ENCODE measurements at regions of chr15 and their contacts with region 1.

Region 1: DNA sequence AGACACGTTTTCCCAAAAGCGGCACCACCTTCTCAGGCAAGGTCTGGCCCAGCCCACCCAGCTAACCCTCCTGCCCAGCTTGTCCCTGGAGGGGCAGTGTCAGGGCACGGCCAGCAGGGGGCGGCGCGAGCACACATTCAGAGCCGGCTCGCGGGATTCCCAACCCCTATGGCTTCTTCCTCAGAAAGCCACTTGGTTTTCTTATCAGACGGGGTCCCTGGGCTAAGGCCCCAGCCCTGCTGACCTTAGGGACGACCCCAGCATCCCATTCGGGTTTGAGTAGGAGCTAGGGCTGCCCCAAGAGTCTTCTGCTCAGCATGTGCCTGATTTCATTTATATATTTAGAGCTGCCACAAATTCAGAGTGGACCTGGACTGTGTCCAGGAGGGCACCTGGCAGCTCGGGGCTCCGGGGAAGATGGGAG is 14.5 kb downstream of the RLBP1 start:
- DNase-seq: peak; percentile 63
- H3K4me3 Mint-ChIP-seq: no peak overlapping the region
- H3K27ac Mint-ChIP-seq: peak overlapping the region; percentile 15
- H3K4me1 Mint-ChIP-seq: peaks cover 39% of the 10 kb centered on the region
- H3K27me3 Mint-ChIP-seq: peaks cover 3% of the 10 kb centered on the region

Region 2: GRCh38 chr15:87874896-87875711 is 1331.8 kb before region 1 on chr15:
- intact Hi-C with region 1: no loop called
- DNase-seq: no peak
- H3K4me3 Mint-ChIP-seq: no peak overlapping the region
- H3K27ac Mint-ChIP-seq: no peak overlapping the region
- H3K4me1 Mint-ChIP-seq: no peaks in the 10 kb centered on the region
- H3K27me3 Mint-ChIP-seq: no peaks in the 10 kb centered on the region

Region 3: DNA sequence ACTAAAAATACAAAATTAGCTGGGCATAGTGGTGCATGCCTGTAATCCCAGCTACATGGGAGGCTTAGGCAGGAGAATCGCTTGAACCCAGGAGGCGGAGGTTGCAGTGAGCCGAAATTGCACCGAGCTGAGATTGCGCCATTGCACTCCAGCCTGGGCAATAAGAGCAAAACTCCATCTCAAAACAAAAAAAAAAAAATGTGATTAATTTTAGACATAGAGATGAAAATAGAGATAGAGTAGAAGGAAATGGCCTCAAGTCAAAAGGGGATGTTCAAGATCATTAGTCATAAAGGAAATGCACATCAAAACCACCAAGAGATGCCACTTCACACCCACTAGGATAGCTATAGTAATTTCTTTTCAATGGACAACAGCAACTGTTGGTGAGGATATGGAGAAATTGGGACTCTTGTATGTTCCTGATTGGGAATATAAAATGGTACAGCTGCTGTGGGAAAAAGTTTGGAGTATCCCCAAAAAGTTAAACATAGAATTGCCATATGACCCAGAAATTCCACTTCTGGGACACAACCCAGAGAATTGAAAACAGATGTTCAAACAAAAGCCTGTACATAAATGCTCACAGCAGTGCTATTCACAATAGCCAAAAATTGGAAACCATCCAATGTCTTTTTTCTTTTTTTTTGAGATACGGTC is 63.3 kb before region 1 on chr15:
- intact Hi-C with region 1: loop called (anchors 1 kb)
- DNase-seq: no peak
- H3K4me3 Mint-ChIP-seq: no peak overlapping the region
- H3K27ac Mint-ChIP-seq: no peak overlapping the region
- H3K4me1 Mint-ChIP-seq: peaks cover 29% of the 10 kb centered on the region
- H3K27me3 Mint-ChIP-seq: no peaks in the 10 kb centered on the region

Region 4: DNA sequence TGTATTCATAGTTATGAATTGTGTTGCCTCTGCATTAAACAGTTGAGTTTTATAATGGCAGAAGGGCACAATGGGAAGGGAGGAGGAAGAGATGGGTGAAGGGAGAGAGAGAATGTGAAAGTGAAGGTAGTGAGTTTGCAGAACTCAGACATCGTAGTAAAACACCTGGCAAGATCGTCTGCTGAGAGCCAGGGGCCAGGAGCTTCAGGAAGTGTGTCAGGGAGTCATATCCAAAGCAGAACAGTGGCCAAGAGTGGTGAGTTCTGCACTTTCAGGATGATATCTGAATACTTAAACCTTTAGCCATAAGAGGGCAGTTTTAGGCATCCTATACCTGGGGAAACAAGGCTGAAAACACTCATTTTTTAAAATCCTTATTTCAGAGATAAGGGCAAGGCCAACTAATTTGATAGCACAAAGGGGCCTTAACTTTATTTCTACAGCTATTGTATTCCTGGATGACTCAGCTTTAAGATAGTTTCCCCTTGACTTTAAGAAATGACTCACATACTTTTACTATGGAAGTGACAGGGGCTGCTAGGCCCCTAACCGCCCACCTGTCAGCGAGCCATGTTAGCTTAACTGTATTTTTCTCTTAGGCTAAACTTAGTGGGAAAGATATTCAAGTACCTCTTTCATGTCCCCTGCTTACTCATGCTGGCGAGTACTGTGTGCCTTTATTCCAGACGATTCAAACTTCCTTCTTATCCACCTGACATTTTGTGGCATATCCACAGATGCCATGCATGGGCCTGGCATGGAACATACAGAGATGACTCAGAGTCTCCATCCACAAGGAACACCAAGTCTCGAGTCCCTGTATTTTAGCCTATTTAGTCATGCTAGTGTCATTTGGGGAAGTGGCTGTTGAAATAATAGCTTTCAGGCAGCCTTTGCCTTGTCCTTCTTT is 39.4 kb before region 1 on chr15:
- intact Hi-C with region 1: loop called (anchors 5 kb)
- DNase-seq: no peak
- H3K4me3 Mint-ChIP-seq: peak overlapping the region; percentile 44
- H3K27ac Mint-ChIP-seq: peak overlapping the region; percentile 86
- H3K4me1 Mint-ChIP-seq: peaks cover 29% of the 10 kb centered on the region
- H3K27me3 Mint-ChIP-seq: no peaks in the 10 kb centered on the region

Region 5: GRCh38 chr15:89243691-89244471 is 37.0 kb after region 1 on chr15 and contains the start of gene FANCI:
- intact Hi-C with region 1: loop called (anchors 1 kb)
- DNase-seq: peak; percentile 94
- H3K4me3 Mint-ChIP-seq: peak within 1 kb of the TSS; percentile 95
- H3K27ac Mint-ChIP-seq: peak within 1 kb of the TSS; percentile 89
- H3K4me1 Mint-ChIP-seq: peaks cover 37% of the 10 kb centered on the region
- H3K27me3 Mint-ChIP-seq: peaks cover 4% of the 10 kb centered on the region
- total RNA-seq, gene FANCI: 176 and 184 TPM in 2 replicates

Region 6: DNA sequence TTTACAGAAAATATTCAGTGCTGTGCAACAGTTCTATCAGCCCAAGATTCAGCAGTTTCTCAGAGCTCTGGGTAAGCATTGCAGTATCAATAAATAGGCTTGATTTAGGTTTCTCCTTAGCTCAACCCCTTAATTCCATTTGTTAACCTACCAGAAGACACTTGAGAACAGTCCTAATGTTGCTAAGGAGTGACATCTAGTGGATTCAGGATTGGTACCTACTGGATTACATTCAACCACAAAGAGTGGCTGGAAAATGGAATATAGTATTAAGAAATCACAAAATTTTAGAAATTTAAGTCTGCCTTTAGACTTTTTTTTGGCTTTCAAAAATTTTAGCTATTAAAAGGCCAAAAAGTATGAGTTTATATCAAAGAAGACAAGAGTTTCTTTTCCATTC is 93.0 kb after region 1 on chr15:
- intact Hi-C with region 1: loop called (anchors 5 kb)
- DNase-seq: no peak
- H3K4me3 Mint-ChIP-seq: no peak overlapping the region
- H3K27ac Mint-ChIP-seq: peak overlapping the region; percentile 84
- H3K4me1 Mint-ChIP-seq: peaks cover 40% of the 10 kb centered on the region
- H3K27me3 Mint-ChIP-seq: no peaks in the 10 kb centered on the region

Region 7: GRCh38 chr15:89334510-89335288 is 127.8 kb after region 1 on chr15 and contains the start of gene POLG:
- intact Hi-C with region 1: loop called (anchors 2 kb)
- DNase-seq: peak; percentile 98
- H3K4me3 Mint-ChIP-seq: peak within 1 kb of the TSS; percentile 81
- H3K27ac Mint-ChIP-seq: peak within 1 kb of the TSS; percentile 85
- H3K4me1 Mint-ChIP-seq: peaks cover 51% of the 10 kb centered on the region
- H3K27me3 Mint-ChIP-seq: peaks cover 5% of the 10 kb centered on the region
- total RNA-seq, gene POLG: 124 and 131 TPM in 2 replicates

Region 8: GRCh38 chr15:89430530-89431341 is 223.8 kb after region 1 on chr15:
- intact Hi-C with region 1: loop called (anchors 5 kb)
- DNase-seq: peak; percentile 80
- H3K4me3 Mint-ChIP-seq: peak overlapping the region; percentile 77
- H3K27ac Mint-ChIP-seq: no peak overlapping the region
- H3K4me1 Mint-ChIP-seq: peaks cover 5% of the 10 kb centered on the region
- H3K27me3 Mint-ChIP-seq: peaks cover 28% of the 10 kb centered on the region

Measured in activated T-helper 2 cell treated with anti-CD3 and anti-CD28 coated beads, Interferon-gamma antibody, Interleukin-2, Interleukin-4, amounts not matched to agents 10 μg/mL and 5 μg/mL and 100 μg/mL, durations not matched to agents 14 hours and 24 hours and 36 hours (primary cell).